Heart right ventricle (tissue), 16 donors: ENCODE measurements at regions of chr5 and their contacts with region 1.

Region 1: DNA sequence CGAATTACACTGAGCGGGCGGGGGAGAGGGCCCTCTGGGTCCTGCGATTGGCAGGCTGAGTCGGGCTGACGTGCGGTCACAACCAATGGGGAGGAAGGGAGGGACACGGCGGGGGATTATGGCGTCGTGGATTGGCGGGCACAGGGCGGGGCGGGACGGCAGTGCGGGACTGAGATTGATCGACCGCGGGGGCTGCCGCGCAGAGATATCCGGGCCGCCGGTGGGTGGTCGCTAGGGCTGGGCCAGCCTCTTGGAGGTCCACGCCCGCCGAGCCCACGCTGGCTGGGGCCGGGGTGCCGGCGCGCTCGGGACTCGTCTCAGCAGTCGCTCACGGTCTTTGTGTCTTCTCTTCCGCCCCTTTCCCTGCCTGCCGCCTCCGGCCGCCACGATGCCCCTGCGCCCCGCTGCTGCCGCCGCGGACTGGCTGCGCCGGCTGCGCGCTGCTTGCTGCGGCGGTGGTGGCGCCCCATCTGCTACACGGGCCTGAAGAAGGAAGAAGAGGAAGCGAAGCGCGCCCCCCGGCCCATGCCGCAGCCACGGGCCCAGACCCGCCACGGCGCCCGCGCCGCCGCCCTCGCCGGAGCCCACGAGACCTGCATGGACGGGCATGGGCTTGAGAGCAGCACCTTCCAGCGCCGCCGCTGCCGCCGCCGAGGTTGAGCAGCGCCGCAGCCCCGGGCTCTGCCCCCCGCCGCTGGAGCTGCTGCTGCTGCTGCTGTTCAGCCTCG is at the start of gene RGMB:
- DNase-seq: peak; percentile 97 to 99
- ATAC-seq: peak; percentile 93 to 99 (median 96)
- H3K4me3 ChIP-seq: peak within 1 kb of the TSS; percentile 72 to 97 (median 82)
- H3K27ac ChIP-seq: peak within 1 kb of the TSS; percentile 84 to 98 (median 93)
- H3K4me1 ChIP-seq: peaks cover 0 to 64% (median 47%) of the 10 kb centered on the region in 9 donors
- H3K27me3 ChIP-seq: peaks cover 0 to 77% (median 0%) of the 10 kb centered on the region in 7 donors
- CTCF ChIP-seq: peak in 1 of 9 donors; percentile 4
- total RNA-seq, gene RGMB: 12.2 to 16.6 (median 14.0) TPM

Region 2: DNA sequence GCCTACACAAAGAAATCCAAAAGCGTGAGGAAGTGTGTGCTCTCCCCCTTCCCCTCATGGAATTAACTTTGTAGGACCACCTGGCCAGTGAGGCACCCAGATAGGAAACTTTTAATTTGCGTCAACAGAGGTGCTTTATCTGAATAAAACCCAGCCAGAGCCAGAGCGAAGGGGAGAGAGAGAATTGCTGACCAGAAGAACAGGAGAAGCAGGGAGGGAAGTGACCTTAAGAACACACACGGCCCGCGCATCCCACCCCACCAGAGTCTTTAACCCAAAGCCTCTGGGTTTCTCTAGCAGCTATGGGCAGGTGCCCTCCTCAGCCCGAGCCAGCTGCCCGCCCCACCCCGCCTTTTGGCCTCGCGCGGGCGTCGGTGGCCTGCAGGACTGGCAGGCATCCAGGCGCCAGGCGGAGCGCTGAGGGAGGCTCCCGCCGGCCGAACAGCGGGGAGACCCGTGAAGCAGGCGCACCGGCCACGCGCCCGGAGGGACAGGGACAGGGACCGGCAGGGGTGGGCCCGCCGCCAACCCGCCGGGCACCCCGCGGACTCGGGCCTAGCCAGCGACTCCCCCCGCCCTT is 1966.5 kb before region 1 on chr5:
- intact Hi-C with region 1: loop called in 1 of 10 experiments (anchors 10 kb)
- DNase-seq: peak; percentile 82 to 88
- ATAC-seq: peak; percentile 67 to 90 (median 73)
- H3K4me3 ChIP-seq: peak overlapping the region; percentile 73 to 93 (median 86)
- H3K27ac ChIP-seq: peak overlapping the region; percentile 95 to 100 (median 100)
- H3K4me1 ChIP-seq: peaks cover 0 to 55% (median 20%) of the 10 kb centered on the region in 9 donors
- H3K27me3 ChIP-seq: no peaks in the 10 kb centered on the region
- CTCF ChIP-seq: peak in 1 of 9 donors; percentile 7

Region 3: DNA sequence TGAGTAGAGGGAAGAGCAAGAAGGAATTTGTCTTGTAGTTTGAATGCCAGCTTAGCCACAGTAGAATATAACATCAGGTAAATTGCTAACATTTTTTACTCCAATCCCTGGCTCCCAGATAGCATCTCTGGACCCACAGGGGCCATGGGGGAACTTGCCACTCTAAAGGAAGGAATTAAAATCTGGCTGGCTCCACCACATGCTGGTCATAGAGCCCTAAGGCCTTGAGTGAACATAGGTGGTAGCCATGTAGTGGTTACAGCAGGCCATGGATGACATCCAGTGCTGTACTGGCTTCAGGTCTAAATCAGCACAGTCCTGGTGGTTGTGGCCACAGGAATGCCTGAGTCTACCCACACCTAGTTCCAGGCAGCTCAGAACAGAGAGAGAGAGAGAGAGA is 110.1 kb before region 1 on chr5:
- intact Hi-C with region 1: no loop called
- DNase-seq: no peak
- ATAC-seq: no peak
- H3K4me3 ChIP-seq: no peak overlapping the region
- H3K27ac ChIP-seq: no peak overlapping the region
- H3K4me1 ChIP-seq: no peaks in the 10 kb centered on the region
- H3K27me3 ChIP-seq: peaks cover 0 to 6% (median 0%) of the 10 kb centered on the region in 7 donors
- CTCF ChIP-seq: no peak

Region 4: GRCh38 chr5:98735806-98736507 is 37.7 kb before region 1 on chr5:
- intact Hi-C with region 1: no loop called
- DNase-seq: no peak
- ATAC-seq: peak in 2 of 8 donors; percentile 15 to 33
- H3K4me3 ChIP-seq: no peak overlapping the region
- H3K27ac ChIP-seq: no peak overlapping the region
- H3K4me1 ChIP-seq: no peaks in the 10 kb centered on the region
- H3K27me3 ChIP-seq: peaks cover 0 to 4% (median 0%) of the 10 kb centered on the region in 7 donors
- CTCF ChIP-seq: no peak

Region 5: DNA sequence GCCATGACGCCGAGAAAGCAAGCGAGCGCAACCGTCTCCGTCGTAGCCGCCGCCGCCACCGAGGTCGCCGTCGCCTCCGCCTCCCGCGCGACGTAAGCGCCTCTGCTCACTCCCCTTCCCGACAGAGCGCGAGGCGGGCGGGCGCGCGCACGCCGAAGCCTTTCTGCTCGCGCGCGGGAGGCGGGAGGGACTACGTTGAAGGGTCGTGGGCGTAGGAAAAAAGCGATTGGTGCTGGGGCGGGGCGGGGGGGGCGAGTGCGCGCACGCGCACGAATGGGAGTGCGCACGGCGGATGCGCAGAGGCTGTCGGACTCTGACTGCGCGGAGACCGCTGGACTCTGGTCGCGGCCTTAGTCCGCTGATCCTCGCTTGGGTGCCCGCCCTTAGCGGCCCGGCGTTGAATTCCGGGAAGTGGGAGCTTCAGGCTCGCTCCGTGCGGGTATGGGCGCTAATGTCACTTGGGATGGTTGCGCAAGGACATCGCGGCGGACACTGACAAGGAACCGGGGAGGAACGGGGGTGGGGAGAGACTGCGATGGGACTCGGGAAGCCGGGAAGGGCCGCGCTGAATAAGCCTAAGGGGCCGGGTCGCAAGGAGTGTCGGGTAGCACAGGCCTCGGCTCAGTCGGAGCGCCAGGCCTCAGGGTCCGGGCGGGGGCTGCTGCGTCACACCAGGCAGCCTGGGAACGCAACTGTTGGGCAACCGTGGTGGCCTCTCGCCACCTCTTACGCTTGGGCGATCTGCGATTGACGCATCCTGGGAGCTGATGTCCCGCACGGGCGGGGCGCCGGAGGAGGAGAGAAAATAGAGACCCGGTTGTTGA is 155.5 kb after region 1 on chr5 and contains the start of gene CHD1:
- intact Hi-C with region 1: loop called in 4 of 10 experiments (anchors 5 to 10 kb)
- DNase-seq: peak; percentile 95 to 96
- ATAC-seq: peak; percentile 91 to 97 (median 94)
- H3K4me3 ChIP-seq: peak within 1 kb of the TSS; percentile 67 to 93 (median 84)
- H3K27ac ChIP-seq: peak within 1 kb of the TSS; percentile 96 to 100 (median 100)
- H3K4me1 ChIP-seq: peaks cover 0 to 73% (median 50%) of the 10 kb centered on the region in 9 donors
- H3K27me3 ChIP-seq: no peaks in the 10 kb centered on the region
- CTCF ChIP-seq: no peak
- total RNA-seq, gene CHD1: 9.9 to 19.6 (median 15.1) TPM

Region 6: DNA sequence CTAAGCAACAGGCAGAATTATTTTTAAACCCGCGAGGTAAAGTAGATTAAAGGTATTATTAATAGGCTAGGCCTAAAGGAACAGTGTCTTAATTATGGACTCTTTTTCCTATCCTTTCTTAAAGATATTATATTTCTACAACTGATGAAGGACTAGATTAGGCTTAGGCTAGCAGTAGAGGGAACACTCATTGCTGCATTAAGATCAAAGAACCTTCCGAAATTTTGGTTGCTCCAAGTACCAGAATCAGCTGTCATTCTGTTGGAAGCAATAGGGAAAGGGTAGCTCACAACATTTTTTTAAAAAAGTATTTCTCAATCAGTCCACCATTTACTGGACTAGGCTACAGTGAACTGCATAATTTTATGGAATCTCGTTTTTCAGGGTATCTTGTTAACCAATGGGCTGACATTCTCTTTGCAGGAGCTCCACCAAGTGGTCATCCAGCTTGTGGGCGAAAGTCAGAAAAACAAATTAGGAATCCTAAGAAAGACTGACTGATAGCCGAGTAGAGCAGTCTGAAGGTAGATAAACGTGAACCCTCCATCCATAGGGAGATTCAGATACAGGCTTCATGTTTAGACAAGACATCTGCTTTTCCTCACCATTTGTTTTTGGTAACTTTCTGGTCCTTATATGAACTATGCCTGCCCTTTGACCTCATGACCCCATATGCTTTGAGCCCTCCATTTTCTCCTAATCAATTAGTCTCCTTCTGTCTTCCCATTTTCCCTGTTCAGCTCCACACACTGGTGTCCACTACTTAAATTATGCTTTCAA is 258.8 kb after region 1 on chr5:
- intact Hi-C with region 1: loop called in 1 of 10 experiments (anchors 5 kb)
- DNase-seq: peak in 1 of 2 donors; percentile 76
- ATAC-seq: peak in 7 of 8 donors; percentile 83 to 90 (median 85)
- H3K4me3 ChIP-seq: peak overlapping the region in 8 of 10 donors; percentile 6 to 51 (median 38)
- H3K27ac ChIP-seq: peak overlapping the region in 9 of 10 donors; percentile 5 to 88 (median 56)
- H3K4me1 ChIP-seq: peaks cover 0 to 47% (median 8%) of the 10 kb centered on the region in 9 donors
- H3K27me3 ChIP-seq: no peaks in the 10 kb centered on the region
- CTCF ChIP-seq: peak; percentile 56 to 92 (median 79)